ENCODE measurements at regions of chr18 and their contacts with region 1.

Region 1: GRCh38 chr18:34880882-34881834 is 160.1 kb upstream of the MAPRE2 start:
- DNase-seq: peak in 1 of 2 donors; percentile 72
- H3K4me3 ChIP-seq: no peak overlapping the region
- H3K27ac ChIP-seq: peak overlapping the region; percentile 86 to 88
- H3K4me1 ChIP-seq: peaks cover 4 to 45% of the 10 kb centered on the region in 2 donors
- H3K27me3 ChIP-seq: no peaks in the 10 kb centered on the region
- CTCF ChIP-seq: peak in 1 of 3 experiments; percentile 27

Region 2: DNA sequence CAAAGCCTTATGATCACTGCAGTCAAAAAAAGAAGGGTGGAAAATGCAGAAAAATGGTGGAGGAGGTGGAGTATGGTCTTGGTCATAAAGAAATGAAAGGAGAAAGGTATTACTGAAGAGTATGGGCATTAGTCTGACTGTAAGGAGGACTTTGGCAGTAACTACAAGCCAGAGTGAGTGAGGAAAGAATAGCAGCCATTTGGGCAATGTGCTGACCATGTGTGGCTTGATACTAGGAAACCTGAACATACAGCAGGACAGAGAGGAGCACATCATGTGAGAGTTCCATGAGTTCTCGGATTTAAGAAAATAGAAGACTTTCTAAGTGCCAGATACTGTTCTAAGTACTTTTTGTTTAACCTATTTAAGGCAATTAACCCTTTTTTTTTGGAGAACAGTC is 162.5 kb before region 1 on chr18:
- intact Hi-C with region 1: no loop called
- DNase-seq: no peak
- H3K4me3 ChIP-seq: no peak overlapping the region
- H3K27ac ChIP-seq: no peak overlapping the region
- H3K4me1 ChIP-seq: no peaks in the 10 kb centered on the region
- H3K27me3 ChIP-seq: no peaks in the 10 kb centered on the region
- CTCF ChIP-seq: no peak

Region 3: GRCh38 chr18:34867520-34867919 is 13.6 kb before region 1 on chr18:
- intact Hi-C with region 1: no loop called
- DNase-seq: peak in 1 of 2 donors; percentile 74
- H3K4me3 ChIP-seq: peak overlapping the region in 1 of 2 donors; percentile 15
- H3K27ac ChIP-seq: peak overlapping the region; percentile 61 to 79
- H3K4me1 ChIP-seq: peaks cover 7 to 18% of the 10 kb centered on the region in 2 donors
- H3K27me3 ChIP-seq: no peaks in the 10 kb centered on the region
- CTCF ChIP-seq: peak in 2 of 3 experiments; percentile 14 to 30

Region 4: GRCh38 chr18:34912010-34912721 is 31.0 kb after region 1 on chr18:
- intact Hi-C with region 1: loop called (anchors 2 kb)
- DNase-seq: no peak
- H3K4me3 ChIP-seq: no peak overlapping the region
- H3K27ac ChIP-seq: no peak overlapping the region
- H3K4me1 ChIP-seq: peaks cover 0 to 9% of the 10 kb centered on the region in 2 donors
- H3K27me3 ChIP-seq: no peaks in the 10 kb centered on the region
- CTCF ChIP-seq: no peak